Endothelial cell of umbilical vein (primary cell): ENCODE measurements at regions of chr1 and their contacts with region 1.

Region 1: DNA sequence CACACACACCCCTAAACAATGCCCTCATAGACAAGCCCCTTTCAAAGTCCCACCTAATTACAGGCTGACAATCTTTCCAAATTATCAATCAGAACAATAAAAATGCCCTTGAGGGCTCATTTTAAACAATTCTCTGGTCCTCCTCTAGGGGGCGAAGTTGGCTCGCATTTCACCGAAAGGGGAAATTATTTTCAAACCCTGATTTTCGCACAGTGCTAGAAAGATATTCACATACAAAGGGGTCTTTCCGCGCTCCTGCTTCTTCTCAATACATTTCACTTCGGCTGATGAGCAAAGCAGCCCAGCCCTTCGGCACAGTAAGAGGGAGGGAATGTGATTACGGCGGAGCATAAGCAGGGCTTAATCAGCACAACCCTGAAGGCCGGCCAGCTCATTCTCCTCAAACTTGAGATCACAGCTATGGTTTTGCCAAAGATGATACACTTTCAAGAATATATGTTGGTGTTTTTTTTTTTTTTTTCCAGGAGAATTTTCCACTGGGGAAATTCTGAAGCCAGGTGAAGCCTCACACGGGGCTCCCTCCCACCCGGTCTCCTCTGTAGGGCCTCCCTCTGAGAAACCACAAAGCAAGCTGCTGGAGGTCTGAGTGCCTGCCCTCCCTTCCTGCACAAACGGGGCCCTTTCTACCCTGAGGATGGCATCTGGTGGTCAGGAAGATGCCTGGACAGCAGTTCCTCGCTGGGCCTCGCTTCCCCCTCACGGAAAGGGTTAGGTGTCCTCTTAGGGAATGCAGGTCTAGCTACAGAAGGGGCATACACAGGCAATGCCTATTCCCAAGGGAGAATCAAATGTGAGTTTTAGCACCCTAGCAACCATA is 66.9 kb downstream of the GNG12 start:
- DNase-seq: peak; percentile 84
- H3K4me3 ChIP-seq: no peak overlapping the region
- H3K27ac ChIP-seq: peak overlapping the region; percentile 58
- H3K4me1 ChIP-seq: peaks cover 23% of the 10 kb centered on the region
- H3K27me3 ChIP-seq: no peaks in the 10 kb centered on the region
- CTCF ChIP-seq: peak; percentile 47 to 72
- POLR2A ChIP-seq: no peak

Region 2: DNA sequence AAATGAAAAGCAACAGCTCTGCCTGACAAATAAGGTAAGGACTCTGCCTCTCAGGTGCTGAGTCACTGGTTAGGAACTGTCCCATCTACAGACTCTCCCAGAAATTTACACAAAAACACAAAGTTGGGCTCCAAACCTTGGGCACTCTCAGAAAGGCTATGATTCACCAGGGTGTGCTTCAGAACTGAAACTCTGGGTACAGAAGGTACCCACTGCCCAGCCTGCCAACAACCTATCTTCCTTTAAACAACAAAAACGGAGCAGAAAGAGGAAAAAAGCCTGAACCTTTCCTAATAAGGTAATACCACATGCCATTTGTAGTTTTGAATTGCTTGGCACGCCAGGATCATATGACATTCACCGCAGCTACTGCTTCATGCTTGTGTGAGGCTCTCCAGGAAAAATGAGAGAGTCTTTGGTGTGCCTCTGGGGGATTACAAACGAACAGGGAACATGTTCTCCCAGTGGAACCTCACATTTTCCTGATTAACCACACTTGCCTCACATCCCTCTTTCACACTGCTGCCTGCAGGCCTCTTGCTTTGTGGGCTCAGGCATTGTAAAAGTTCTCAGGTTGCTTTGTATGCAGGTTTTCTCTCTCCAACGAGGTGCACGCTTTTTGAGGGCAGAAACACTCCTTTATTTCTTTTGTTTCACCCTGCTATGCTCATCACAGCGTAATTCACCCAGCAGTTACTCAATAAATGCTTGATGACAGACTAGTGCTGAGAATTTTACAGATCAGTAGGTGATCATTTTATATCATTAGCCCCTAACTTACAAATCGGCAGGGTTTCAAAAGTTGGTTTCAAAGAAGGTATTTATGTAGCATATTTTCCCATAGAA is 16.3 kb before region 1 on chr1:
- CTCF ChIA-PET with region 1: interaction called, 12 read pairs
- POLR2A ChIA-PET with region 1: no interaction called
- dilution Hi-C with region 1: no loop called
- intact Hi-C with region 1: no loop called
- DNase-seq: peak; percentile 76
- H3K4me3 ChIP-seq: no peak overlapping the region
- H3K27ac ChIP-seq: peak overlapping the region; percentile 55
- H3K4me1 ChIP-seq: peaks cover 67% of the 10 kb centered on the region
- H3K27me3 ChIP-seq: no peaks in the 10 kb centered on the region
- CTCF ChIP-seq: no peak
- POLR2A ChIP-seq: no peak

Region 3: GRCh38 chr1:67814121-67814772 is 47.9 kb after region 1 on chr1:
- CTCF ChIA-PET with region 1: interaction called, 10 read pairs
- POLR2A ChIA-PET with region 1: no interaction called
- dilution Hi-C with region 1: no loop called
- intact Hi-C with region 1: loop called (anchors 1 kb)
- DNase-seq: peak; percentile 72
- H3K4me3 ChIP-seq: no peak overlapping the region
- H3K27ac ChIP-seq: peak overlapping the region; percentile 36
- H3K4me1 ChIP-seq: peaks cover 56% of the 10 kb centered on the region
- H3K27me3 ChIP-seq: no peaks in the 10 kb centered on the region
- CTCF ChIP-seq: no peak
- POLR2A ChIP-seq: no peak

Region 4: GRCh38 chr1:67897270-67897949 is 131.1 kb after region 1 on chr1:
- CTCF ChIA-PET with region 1: no interaction called
- POLR2A ChIA-PET with region 1: no interaction called
- dilution Hi-C with region 1: no loop called
- intact Hi-C with region 1: loop called (anchors 5 kb)
- DNase-seq: peak; percentile 97
- H3K4me3 ChIP-seq: no peak overlapping the region
- H3K27ac ChIP-seq: peak overlapping the region; percentile 91
- H3K4me1 ChIP-seq: peaks cover 26% of the 10 kb centered on the region
- H3K27me3 ChIP-seq: no peaks in the 10 kb centered on the region
- CTCF ChIP-seq: no peak
- POLR2A ChIP-seq: no peak

Region 5: DNA sequence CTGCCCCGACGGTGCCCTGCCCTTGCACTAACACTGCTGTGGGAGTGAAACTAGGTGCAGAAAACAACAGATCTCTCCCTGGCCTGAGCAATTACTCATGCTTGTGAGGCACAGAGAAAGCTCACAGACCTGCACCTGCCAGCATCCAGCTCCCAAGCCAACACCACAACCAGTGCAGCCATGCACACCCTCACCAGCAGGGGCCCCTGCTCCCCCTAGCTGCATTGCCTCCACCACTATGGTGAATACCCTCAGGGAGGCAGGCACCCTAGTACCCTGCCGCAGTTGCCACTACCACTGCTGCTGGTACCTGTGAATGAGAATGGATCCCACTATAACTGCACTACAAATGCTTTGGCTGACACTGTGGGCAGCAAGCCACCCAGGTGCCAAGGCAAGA is 291.2 kb after region 1 on chr1:
- CTCF ChIA-PET with region 1: interaction called, 30 read pairs
- POLR2A ChIA-PET with region 1: no interaction called
- dilution Hi-C with region 1: no loop called
- intact Hi-C with region 1: loop called (anchors 2 kb)
- DNase-seq: no peak
- H3K4me3 ChIP-seq: no peak overlapping the region
- H3K27ac ChIP-seq: no peak overlapping the region
- H3K4me1 ChIP-seq: no peaks in the 10 kb centered on the region
- H3K27me3 ChIP-seq: no peaks in the 10 kb centered on the region
- CTCF ChIP-seq: no peak
- POLR2A ChIP-seq: no peak

Region 6: GRCh38 chr1:68506386-68506785 is 740.0 kb after region 1 on chr1:
- CTCF ChIA-PET with region 1: no interaction called
- POLR2A ChIA-PET with region 1: no interaction called
- dilution Hi-C with region 1: no loop called
- intact Hi-C with region 1: no loop called
- DNase-seq: no peak
- H3K4me3 ChIP-seq: no peak overlapping the region
- H3K27ac ChIP-seq: no peak overlapping the region
- H3K4me1 ChIP-seq: no peaks in the 10 kb centered on the region
- H3K27me3 ChIP-seq: no peaks in the 10 kb centered on the region
- CTCF ChIP-seq: no peak
- POLR2A ChIP-seq: no peak